CD8-positive, alpha-beta T cell (primary cell): ENCODE measurements at regions of chr19 and their contacts with region 1.

Region 1: DNA sequence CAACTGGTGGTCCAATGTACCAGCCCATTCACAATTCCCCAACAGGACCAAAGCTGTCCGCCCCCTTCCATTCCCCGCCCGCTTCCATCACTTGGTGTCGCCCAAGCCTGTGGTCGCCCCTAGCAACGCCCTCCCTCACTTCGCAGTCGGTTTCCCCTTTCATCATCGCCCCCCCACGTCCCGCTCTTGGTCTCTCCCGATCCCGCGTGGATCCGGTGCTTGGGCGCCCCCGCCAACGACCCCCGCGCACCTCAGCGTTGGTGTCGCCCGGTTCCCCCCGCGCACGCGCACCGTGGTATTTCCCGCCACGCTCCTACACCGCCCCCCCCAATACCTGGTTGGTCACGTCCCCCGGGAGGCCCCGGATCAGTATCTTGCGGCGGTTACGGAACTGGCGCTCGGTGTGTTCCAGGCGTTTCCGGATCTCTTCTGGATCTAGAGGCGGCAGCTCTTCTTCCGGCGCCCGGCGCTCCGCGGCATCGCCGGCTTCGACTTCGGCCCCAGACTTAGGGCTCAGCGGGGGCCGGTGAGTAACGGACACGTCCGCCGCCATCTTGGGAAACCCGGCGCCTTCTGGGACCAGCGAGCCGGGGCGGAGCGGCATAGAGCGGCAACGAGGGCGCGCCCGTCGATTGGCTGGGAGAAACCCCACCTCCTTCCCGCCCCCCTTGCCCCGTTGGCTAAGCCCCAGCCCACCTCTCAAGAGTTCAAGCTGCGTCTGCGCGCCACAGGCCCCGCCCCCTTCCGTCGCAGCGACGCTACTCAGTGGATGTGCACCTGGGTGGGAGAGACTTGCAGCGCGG is at the start of gene RAVER1:
- DNase-seq: peak; percentile 94 to 99 (median 98)
- ATAC-seq: peak; percentile 96
- H3K4me3 ChIP-seq: peak within 1 kb of the TSS; percentile 93 to 97
- H3K4me3 Mint-ChIP-seq: peak within 1 kb of the TSS; percentile 95
- H3K27ac ChIP-seq: peak within 1 kb of the TSS; percentile 76 to 95
- H3K27ac Mint-ChIP-seq: peak within 1 kb of the TSS; percentile 93
- H3K4me1 ChIP-seq: peaks cover 30% of the 10 kb centered on the region
- H3K4me1 Mint-ChIP-seq: peaks cover 35% of the 10 kb centered on the region
- H3K27me3 ChIP-seq: no peaks in the 10 kb centered on the region
- H3K27me3 Mint-ChIP-seq: no peaks in the 10 kb centered on the region
- CTCF ChIP-seq: no peak
- total RNA-seq, gene RAVER1: 33.3 to 33.6 TPM

Region 2: DNA sequence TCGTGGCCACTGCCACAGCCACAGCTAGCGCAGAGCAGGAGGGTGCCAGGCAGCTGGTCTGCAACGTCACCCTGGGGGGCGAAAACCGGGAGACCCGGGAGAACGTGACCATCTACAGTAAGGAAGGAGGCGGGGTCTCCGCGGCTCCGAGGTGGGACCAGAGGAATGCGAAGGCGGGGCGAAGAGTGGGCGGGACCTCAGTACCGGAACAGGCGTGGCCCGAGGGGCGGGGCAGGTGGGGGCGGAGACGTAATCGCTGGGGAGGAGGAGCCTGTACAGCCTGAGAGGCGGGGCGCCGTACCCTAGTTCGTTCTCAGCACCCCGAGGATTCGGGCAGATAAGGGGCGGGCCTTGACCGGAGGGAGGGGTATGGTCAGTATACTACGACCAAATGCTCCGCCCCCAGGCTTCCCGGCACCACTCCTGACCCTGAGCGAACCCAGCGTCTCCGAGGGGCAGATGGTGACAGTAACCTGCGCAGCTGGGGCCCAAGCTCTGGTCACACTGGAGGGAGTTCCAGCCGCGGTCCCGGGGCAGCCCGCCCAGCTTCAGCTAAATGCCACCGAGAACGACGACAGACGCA is 40.9 kb before region 1 on chr19:
- CTCF ChIA-PET with region 1: no interaction called
- POLR2A ChIA-PET with region 1: interaction called, 4 read pairs
- intact Hi-C with region 1: loop called (anchors 1 to 5 kb)
- DNase-seq: peak; percentile 41 to 79 (median 69)
- ATAC-seq: peak; percentile 45
- H3K4me3 ChIP-seq: peak overlapping the region; percentile 47 to 51
- H3K4me3 Mint-ChIP-seq: peak overlapping the region; percentile 80
- H3K27ac ChIP-seq: no peak overlapping the region
- H3K27ac Mint-ChIP-seq: no peak overlapping the region
- H3K4me1 ChIP-seq: peaks cover 79% of the 10 kb centered on the region
- H3K4me1 Mint-ChIP-seq: peaks cover 70% of the 10 kb centered on the region
- H3K27me3 ChIP-seq: peaks cover 58 to 78% of the 10 kb centered on the region in 2 experiments
- H3K27me3 Mint-ChIP-seq: peaks cover 59% of the 10 kb centered on the region
- CTCF ChIP-seq: no peak

Region 3: GRCh38 chr19:10315335-10316214 is 17.6 kb before region 1 on chr19 and contains the start of gene FDX2:
- CTCF ChIA-PET with region 1: interaction called, 5 read pairs
- POLR2A ChIA-PET with region 1: interaction called, 8 read pairs
- intact Hi-C with region 1: loop called (anchors 1 kb)
- DNase-seq: peak; percentile 76 to 94 (median 91)
- ATAC-seq: peak; percentile 91
- H3K4me3 ChIP-seq: peak within 1 kb of the TSS; percentile 58 to 94
- H3K4me3 Mint-ChIP-seq: peak within 1 kb of the TSS; percentile 90
- H3K27ac ChIP-seq: peak within 1 kb of the TSS; percentile 41 to 51
- H3K27ac Mint-ChIP-seq: peak within 1 kb of the TSS; percentile 89
- H3K4me1 ChIP-seq: peaks cover 13% of the 10 kb centered on the region
- H3K4me1 Mint-ChIP-seq: peaks cover 12% of the 10 kb centered on the region
- H3K27me3 ChIP-seq: no peaks in the 10 kb centered on the region
- H3K27me3 Mint-ChIP-seq: no peaks in the 10 kb centered on the region
- CTCF ChIP-seq: no peak
- total RNA-seq, gene FDX2: 3.1 to 4.2 TPM

Region 4: GRCh38 chr19:10380313-10381102 is 47.4 kb after region 1 on chr19 and contains the start of gene TYK2:
- CTCF ChIA-PET with region 1: interaction called, 7 read pairs
- POLR2A ChIA-PET with region 1: interaction called, 11 read pairs
- intact Hi-C with region 1: loop called (anchors 1 kb)
- DNase-seq: peak; percentile 91 to 99 (median 96)
- ATAC-seq: peak; percentile 98
- H3K4me3 ChIP-seq: peak within 1 kb of the TSS; percentile 73 to 84
- H3K4me3 Mint-ChIP-seq: peak within 1 kb of the TSS; percentile 96
- H3K27ac ChIP-seq: peak within 1 kb of the TSS; percentile 76 to 88
- H3K27ac Mint-ChIP-seq: peak within 1 kb of the TSS; percentile 96
- H3K4me1 ChIP-seq: peaks cover 9% of the 10 kb centered on the region
- H3K4me1 Mint-ChIP-seq: peaks cover 22% of the 10 kb centered on the region
- H3K27me3 ChIP-seq: no peaks in the 10 kb centered on the region
- H3K27me3 Mint-ChIP-seq: no peaks in the 10 kb centered on the region
- CTCF ChIP-seq: no peak
- total RNA-seq, gene TYK2: 244 to 250 TPM

Region 5: DNA sequence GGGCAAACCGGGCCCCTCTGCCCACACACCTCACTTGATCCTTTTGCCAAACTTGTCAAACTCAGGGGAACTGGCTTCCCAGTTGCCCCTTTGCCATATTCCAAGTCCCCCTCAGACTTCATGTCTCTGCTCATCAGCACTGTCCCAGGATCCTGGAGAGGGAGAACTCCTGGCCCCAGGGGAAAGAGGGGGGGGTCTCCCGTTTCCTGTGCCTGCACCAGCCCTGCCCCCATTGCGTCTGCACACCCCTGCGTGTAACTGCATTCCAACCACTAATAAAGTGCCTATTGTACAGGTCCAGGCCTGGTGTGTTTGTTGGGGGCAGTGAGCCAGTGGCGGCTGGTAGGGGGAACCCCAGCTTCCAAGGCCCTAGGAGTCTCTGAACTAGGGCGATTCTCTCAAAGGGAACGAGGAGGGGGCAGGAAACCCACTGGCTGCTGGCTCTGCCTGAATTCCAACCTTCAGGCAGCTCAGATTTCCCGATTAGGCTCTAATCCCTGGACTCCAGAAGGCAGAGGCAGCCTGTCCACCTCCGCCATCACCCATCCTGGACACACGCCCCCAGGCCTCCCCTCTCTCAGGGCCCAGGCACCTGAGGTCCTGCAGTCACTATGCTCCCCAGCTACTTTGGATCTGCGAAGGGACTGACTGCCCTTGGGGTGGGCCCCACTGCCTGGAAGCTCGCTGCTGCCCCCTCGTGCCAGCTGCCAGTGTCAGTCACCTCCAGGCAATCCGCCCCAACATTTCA is 311.3 kb after region 1 on chr19:
- CTCF ChIA-PET with region 1: no interaction called
- POLR2A ChIA-PET with region 1: no interaction called
- intact Hi-C with region 1: no loop called
- DNase-seq: peak; percentile 76 to 92 (median 87)
- ATAC-seq: peak; percentile 90
- H3K4me3 ChIP-seq: no peak overlapping the region
- H3K4me3 Mint-ChIP-seq: peak overlapping the region; percentile 22
- H3K27ac ChIP-seq: peak overlapping the region in 1 of 2 experiments; percentile 65
- H3K27ac Mint-ChIP-seq: peak overlapping the region; percentile 92
- H3K4me1 ChIP-seq: peaks cover 39% of the 10 kb centered on the region
- H3K4me1 Mint-ChIP-seq: peaks cover 43% of the 10 kb centered on the region
- H3K27me3 ChIP-seq: no peaks in the 10 kb centered on the region
- H3K27me3 Mint-ChIP-seq: no peaks in the 10 kb centered on the region
- CTCF ChIP-seq: peak; percentile 84